Right ventricle myocardium inferior (tissue), 1 donor: ENCODE measurements at regions of chr10 and their contacts with region 1.

Region 1: DNA sequence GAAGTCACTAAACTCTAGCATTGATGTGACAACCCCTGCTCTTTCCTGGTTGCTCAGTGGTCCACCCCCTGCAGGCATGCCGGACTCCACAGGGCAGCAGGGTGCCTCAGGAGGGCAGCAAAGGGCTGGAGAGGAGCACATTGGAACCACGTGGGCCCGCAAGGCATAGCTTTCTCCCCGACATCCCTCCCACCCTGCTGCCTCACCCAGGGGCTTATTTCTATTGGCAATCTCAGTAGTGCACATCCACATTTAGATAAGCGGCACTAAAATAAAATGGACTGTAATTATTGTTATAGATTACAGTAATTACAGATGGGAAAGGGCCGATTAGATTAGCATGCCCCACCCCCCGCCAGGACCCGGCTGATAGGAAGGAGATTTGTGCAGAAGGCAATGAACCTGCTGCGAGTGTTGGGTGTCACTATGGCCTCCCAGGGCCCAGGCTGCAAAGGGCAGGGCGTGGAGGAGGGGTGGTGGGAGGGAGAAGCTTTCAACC is 580.1 kb downstream of the GRID1 start:
- DNase-seq: no peak
- ATAC-seq: peak; percentile 56

Region 2: DNA sequence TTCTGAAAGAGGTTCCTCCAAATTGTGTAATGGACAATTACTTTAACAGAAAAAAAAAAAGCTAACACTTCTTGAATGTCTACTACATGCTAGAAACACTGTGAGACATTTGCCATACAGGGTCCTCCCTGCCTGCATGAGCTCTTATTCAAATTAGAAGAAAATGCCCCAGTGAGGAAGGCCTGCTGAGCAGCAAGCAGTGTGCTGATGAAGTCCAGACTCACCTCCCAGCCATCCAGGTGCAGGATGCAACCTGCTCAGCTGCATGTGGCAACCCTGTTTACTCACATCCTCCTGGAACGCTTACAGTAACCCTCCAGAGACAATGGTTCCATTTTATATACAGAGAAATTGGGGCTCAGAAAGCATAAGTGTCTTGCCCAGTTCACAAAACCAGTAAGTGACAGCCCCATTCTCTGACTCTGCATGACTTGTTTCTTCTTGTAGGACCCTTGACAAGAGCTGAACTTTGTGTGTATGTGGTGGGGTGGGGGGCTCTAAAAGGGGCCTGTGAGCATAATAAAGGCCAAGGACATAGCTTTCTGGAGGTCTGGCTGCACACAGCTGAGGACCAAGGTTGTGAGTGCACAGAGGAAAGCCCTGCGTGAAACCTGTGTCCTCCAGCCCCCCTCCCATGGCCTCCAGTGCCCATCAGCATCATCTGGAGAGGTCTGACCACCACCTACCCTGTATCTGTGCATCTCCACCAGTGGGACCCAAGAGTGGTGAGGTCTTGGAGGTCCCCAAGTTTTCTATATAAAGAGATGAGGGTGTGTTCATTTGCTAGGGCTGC is 192.3 kb after region 1 on chr10:
- intact Hi-C with region 1: no loop called
- DNase-seq: no peak
- ATAC-seq: no peak

Region 3: DNA sequence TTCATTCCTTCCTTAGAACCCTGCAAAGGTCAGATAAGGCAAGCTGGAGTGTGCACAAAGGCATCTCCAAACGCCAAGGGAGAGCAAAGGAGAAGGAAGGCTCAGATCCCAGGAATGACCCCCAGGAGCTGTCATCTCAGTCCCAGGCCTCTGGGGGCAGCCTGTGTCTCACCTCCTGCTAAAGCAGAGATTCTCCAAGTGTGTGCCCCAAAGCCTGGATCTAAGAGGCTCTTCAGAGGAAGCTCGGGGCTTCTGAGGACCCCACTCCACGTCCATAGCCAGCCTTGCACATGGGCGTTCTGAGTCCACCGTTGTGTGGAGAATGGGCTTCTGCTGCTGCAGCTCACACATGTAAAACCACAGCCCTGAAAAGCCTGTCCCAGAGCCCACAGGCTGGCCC is 585.2 kb after region 1 on chr10:
- intact Hi-C with region 1: loop called (anchors 5 kb)
- DNase-seq: no peak
- ATAC-seq: no peak